Activated CD8-positive, alpha-beta memory T cell treated with anti-CD3 and anti-CD28 coated beads, Interleukin-2, amount 10 ng/mL, durations not matched to agents 7 days and 5 days (primary cell): ENCODE measurements at regions of chr12 and their contacts with region 1.

Region 1: DNA sequence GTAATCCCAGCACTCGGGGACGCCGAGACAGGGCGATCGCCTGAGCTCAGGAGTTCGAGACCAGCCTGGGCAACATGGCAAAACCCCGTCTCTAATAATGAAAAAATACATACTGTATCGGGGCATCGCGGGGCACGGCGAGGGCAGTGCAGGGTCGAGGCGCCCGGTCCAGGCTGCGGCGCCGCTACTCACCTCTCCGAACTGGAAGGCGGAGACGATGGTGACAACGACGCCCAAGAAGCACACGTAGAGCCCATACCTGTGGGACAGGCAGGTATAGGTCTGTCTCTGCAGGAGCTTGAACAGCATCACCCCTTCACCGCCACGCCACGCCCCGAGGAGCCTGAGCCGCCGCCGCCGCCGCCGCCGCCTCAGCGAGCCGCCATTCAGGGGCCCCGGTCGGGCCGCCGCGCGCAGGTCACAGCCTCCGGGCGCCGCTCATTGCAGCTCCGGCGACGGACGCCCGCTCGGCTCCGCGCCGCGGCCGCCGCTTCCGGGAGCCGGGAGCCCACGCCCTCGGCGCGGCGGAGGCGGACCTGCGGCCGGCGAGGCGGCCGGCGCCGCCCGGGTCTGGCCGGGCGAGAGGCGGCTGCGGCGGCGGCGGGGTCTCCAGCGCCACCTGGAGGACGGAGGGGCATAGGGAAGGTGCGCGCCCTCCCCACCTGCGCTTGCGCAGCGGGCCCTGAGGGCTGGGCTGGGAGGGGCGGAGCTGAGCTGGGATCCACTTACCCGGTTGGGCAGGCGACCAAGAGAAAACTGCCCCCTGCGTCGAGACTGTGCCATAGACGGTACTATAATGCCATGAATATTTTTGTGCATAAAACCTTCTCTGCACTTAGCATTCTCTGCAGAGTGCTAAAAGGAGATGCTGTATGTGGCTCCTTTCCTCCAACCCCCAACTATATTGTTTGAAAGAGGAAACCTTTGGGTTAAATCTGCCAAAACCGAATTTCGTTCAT is at the start of gene GNPTAB:
- DNase-seq: peak; percentile 98
- ATAC-seq: peak; percentile 95
- H3K4me3 Mint-ChIP-seq: peak within 1 kb of the TSS; percentile 99
- H3K27ac Mint-ChIP-seq: peak within 1 kb of the TSS; percentile 94
- H3K4me1 Mint-ChIP-seq: peaks cover 46% of the 10 kb centered on the region
- H3K27me3 Mint-ChIP-seq: no peaks in the 10 kb centered on the region
- total RNA-seq, gene GNPTAB: 111 to 156 TPM

Region 2: DNA sequence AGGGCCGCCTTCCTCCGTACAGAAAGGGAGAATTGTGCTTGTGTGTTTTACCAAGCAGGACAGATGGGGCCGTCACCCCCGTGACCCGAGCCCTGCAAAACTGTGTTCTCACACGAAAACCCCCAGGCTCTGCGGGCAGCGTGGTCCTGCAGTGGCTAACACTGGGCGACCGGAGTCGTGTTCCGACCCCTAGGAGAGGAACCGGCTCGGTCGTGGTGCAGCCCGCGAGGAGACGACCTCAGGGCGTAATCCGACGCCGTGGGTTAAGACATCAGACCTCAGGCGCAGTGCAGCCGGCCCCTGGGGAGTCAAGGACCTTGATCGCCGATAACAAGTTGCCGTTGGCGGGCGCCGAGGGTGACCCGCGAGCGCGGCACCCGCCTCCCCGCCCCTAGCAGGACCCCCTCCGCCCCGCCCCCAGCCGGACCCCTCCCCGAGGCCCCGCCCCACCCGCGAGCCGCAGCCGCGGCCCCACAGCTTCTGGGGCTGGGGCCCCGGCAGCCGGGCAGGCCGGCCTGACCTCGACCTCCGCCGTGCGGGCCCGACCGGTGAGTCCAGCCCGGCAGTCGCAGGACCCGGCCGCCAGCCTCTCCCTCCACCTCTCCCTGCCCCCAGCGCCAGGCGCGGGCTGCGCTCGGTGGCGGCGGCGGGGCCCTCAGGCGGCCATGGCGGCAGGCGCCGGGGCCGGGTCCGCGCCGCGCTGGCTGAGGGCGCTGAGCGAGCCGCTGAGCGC is 133.3 kb before region 1 on chr12 and contains the start of gene CHPT1:
- CTCF ChIA-PET with region 1: no interaction called
- DNase-seq: peak; percentile 71
- ATAC-seq: peak; percentile 77
- H3K4me3 Mint-ChIP-seq: peak within 1 kb of the TSS; percentile 83
- H3K27ac Mint-ChIP-seq: peak within 1 kb of the TSS; percentile 84
- H3K4me1 Mint-ChIP-seq: peaks cover 34% of the 10 kb centered on the region
- H3K27me3 Mint-ChIP-seq: no peaks in the 10 kb centered on the region
- total RNA-seq, gene CHPT1: 14.3 to 20.8 TPM

Region 3: GRCh38 chr12:101759396-101760047 is 71.1 kb before region 1 on chr12:
- CTCF ChIA-PET with region 1: interaction called, 13 read pairs
- DNase-seq: no peak
- ATAC-seq: no peak
- H3K4me3 Mint-ChIP-seq: no peak overlapping the region
- H3K27ac Mint-ChIP-seq: no peak overlapping the region
- H3K4me1 Mint-ChIP-seq: no peaks in the 10 kb centered on the region
- H3K27me3 Mint-ChIP-seq: no peaks in the 10 kb centered on the region

Region 4: GRCh38 chr12:101773650-101774162 is 56.9 kb before region 1 on chr12:
- CTCF ChIA-PET with region 1: interaction called, 159 read pairs
- DNase-seq: peak; percentile 78
- ATAC-seq: peak; percentile 79
- H3K4me3 Mint-ChIP-seq: no peak overlapping the region
- H3K27ac Mint-ChIP-seq: peak overlapping the region; percentile 62
- H3K4me1 Mint-ChIP-seq: peaks cover 30% of the 10 kb centered on the region
- H3K27me3 Mint-ChIP-seq: no peaks in the 10 kb centered on the region

Region 5: GRCh38 chr12:101782273-101782731 is 48.3 kb before region 1 on chr12:
- CTCF ChIA-PET with region 1: interaction called, 36 read pairs
- DNase-seq: peak; percentile 52
- ATAC-seq: peak; percentile 61
- H3K4me3 Mint-ChIP-seq: no peak overlapping the region
- H3K27ac Mint-ChIP-seq: peak overlapping the region; percentile 82
- H3K4me1 Mint-ChIP-seq: peaks cover 53% of the 10 kb centered on the region
- H3K27me3 Mint-ChIP-seq: no peaks in the 10 kb centered on the region

Region 6: GRCh38 chr12:101792051-101792931 is 38.4 kb before region 1 on chr12:
- CTCF ChIA-PET with region 1: interaction called, 186 read pairs
- DNase-seq: no peak
- ATAC-seq: no peak
- H3K4me3 Mint-ChIP-seq: peak overlapping the region; percentile 7
- H3K27ac Mint-ChIP-seq: peak overlapping the region; percentile 76
- H3K4me1 Mint-ChIP-seq: peaks cover 59% of the 10 kb centered on the region
- H3K27me3 Mint-ChIP-seq: no peaks in the 10 kb centered on the region

Region 7: DNA sequence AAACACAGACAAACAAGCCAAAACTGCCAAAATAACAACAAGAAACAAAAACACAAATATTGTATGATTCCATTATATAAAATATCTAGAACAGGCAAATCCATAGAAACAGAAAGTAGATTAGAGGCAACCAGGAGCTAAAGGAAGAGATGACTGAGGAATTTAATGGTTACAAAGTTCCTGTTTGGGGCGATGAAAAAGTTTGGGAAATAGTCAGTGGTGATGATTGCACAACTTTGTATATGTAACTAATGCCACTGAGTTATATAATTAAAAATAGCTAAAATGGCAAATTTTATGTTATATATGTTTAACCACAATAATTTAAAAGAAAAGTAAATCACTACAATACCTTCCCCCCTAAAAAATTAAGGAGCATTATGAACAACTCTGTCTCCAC is 24.4 kb before region 1 on chr12:
- CTCF ChIA-PET with region 1: interaction called, 10 read pairs
- DNase-seq: no peak
- ATAC-seq: no peak
- H3K4me3 Mint-ChIP-seq: no peak overlapping the region
- H3K27ac Mint-ChIP-seq: no peak overlapping the region
- H3K4me1 Mint-ChIP-seq: peaks cover 63% of the 10 kb centered on the region
- H3K27me3 Mint-ChIP-seq: no peaks in the 10 kb centered on the region